Tibial artery (tissue), 4 donors: ENCODE measurements at regions of chr3 and their contacts with region 1.

Region 1: GRCh38 chr3:108489771-108490170 is 20.6 kb downstream of the MYH15 start:
- DNase-seq: no peak
- H3K4me3 ChIP-seq: no peak overlapping the region
- H3K27ac ChIP-seq: no peak overlapping the region
- H3K4me1 ChIP-seq: peaks cover 0 to 7% (median 2%) of the 10 kb centered on the region in 4 donors
- H3K27me3 ChIP-seq: no peaks in the 10 kb centered on the region
- CTCF ChIP-seq: peak; percentile 68 to 84

Region 2: DNA sequence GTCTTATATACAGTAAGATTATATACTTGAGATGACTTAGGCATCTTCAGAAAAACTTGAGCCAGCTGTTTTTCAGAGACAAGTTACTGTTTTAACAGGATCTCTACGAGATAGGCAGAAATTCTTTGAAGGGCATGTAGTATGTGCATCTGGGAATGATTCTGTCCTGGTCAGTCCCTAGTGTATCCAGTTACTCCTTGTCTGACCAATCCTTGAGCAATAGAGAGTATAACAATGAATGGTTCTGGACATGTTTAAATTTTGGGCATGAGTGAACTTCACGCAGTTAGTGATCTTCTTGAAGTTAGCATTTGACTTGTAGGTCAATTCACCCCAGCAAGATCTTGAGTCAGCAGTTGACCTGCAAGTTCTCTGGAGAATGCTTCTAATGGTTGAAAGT is 218.1 kb before region 1 on chr3:
- intact Hi-C with region 1: no loop called
- DNase-seq: no peak
- H3K4me3 ChIP-seq: no peak overlapping the region
- H3K27ac ChIP-seq: no peak overlapping the region
- H3K4me1 ChIP-seq: no peaks in the 10 kb centered on the region
- H3K27me3 ChIP-seq: no peaks in the 10 kb centered on the region
- CTCF ChIP-seq: no peak

Region 3: DNA sequence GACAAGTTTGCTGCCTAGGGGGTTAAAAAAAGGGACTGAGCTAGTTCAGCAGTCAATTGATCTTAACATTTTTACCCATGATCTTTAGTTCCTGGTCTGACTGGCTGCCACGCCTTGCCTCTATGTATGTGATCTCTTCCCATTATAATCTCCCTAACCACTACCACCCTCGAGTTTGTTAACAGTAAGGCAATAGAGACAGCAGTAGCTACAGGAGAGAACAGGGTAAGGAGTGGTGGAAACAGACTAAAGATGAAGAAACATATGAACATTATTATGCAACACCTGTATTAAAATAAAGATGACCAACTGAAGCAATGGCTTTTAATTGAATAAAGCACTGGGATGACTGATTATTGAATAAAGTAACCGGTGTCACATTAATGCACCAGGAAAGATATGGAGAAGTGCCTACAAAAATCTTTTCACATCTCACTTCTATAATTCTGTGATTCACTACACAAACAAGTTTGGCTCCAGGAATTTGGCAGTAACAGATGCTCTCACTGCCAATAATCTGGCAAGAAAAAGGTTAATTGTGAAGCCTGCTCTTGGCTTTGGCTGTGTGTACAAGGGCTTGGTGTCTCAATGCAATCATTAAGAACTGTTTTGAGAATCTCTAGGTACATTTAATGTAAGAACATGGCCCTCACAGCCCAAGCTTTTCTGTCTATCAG is 97.7 kb before region 1 on chr3:
- intact Hi-C with region 1: no loop called
- DNase-seq: no peak
- H3K4me3 ChIP-seq: no peak overlapping the region
- H3K27ac ChIP-seq: no peak overlapping the region
- H3K4me1 ChIP-seq: peaks cover 0 to 5% (median 0%) of the 10 kb centered on the region in 4 donors
- H3K27me3 ChIP-seq: no peaks in the 10 kb centered on the region
- CTCF ChIP-seq: no peak

Region 4: GRCh38 chr3:108552267-108553159 is 62.7 kb after region 1 on chr3:
- intact Hi-C with region 1: loop called (anchors 5 kb)
- DNase-seq: no peak
- H3K4me3 ChIP-seq: no peak overlapping the region
- H3K27ac ChIP-seq: no peak overlapping the region
- H3K4me1 ChIP-seq: peaks cover 0 to 11% (median 0%) of the 10 kb centered on the region in 4 donors
- H3K27me3 ChIP-seq: no peaks in the 10 kb centered on the region
- CTCF ChIP-seq: peak; percentile 48 to 66